ENCODE measurements at regions of chr3 and their contacts with region 1.

Region 1: GRCh38 chr3:119579366-119580165 is at the start of gene ADPRH:
- DNase-seq: peak; percentile 63 to 84 (median 67)
- H3K4me3 ChIP-seq: peak within 1 kb of the TSS; percentile 62 to 77 (median 75)
- H3K4me3 Mint-ChIP-seq: peak within 1 kb of the TSS; percentile 90 to 96
- H3K27ac ChIP-seq: peak within 1 kb of the TSS; percentile 97 to 98
- H3K27ac Mint-ChIP-seq: peak within 1 kb of the TSS; percentile 96 to 99 (median 98)
- H3K4me1 ChIP-seq: peaks cover 19 to 29% of the 10 kb centered on the region in 2 donors
- H3K4me1 Mint-ChIP-seq: peaks cover 25% of the 10 kb centered on the region
- H3K27me3 ChIP-seq: no peaks in the 10 kb centered on the region
- H3K27me3 Mint-ChIP-seq: no peaks in the 10 kb centered on the region
- CTCF ChIP-seq: no peak
- polyA plus RNA-seq, gene ADPRH: 10.6 to 37.8 (median 31.5) TPM

Region 2: DNA sequence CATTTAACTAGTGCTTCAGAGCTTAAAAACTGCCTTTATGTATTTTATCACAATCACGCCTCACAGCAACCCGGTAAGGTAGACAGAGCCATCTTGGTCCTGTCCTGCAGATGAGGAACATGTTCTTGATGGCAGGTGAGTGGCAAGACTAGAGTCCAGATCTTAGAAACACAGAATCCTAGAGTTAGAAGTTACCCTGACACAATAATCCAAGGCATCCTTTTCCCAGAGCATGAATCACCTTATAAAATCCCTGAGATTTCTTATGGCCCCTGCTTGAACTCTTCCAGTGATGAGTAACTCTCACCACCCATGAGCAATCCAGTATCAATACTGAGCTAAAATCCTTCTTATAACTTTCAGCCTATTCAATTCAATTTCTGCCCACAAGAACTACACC is 64.0 kb after region 1 on chr3:
- intact Hi-C with region 1: loop called in 1 of 2 experiments (anchors 10 kb)
- DNase-seq: peak in 1 of 3 donors; percentile 36
- H3K4me3 ChIP-seq: no peak overlapping the region
- H3K4me3 Mint-ChIP-seq: no peak overlapping the region
- H3K27ac ChIP-seq: no peak overlapping the region
- H3K27ac Mint-ChIP-seq: no peak overlapping the region
- H3K4me1 ChIP-seq: peaks cover 10 to 11% of the 10 kb centered on the region in 2 donors
- H3K4me1 Mint-ChIP-seq: peaks cover 14% of the 10 kb centered on the region
- H3K27me3 ChIP-seq: no peaks in the 10 kb centered on the region
- H3K27me3 Mint-ChIP-seq: peaks cover 0 to 2% (median 0%) of the 10 kb centered on the region in 3 donors
- CTCF ChIP-seq: no peak

Region 3: GRCh38 chr3:119779731-119780383 is 200.3 kb after region 1 on chr3:
- intact Hi-C with region 1: no loop called
- DNase-seq: no peak
- H3K4me3 ChIP-seq: no peak overlapping the region
- H3K4me3 Mint-ChIP-seq: no peak overlapping the region
- H3K27ac ChIP-seq: peak overlapping the region in 1 of 2 donors; percentile 60
- H3K27ac Mint-ChIP-seq: peak overlapping the region in 5 of 7 donors; percentile 19 to 77 (median 59)
- H3K4me1 ChIP-seq: peaks cover 20 to 27% of the 10 kb centered on the region in 2 donors
- H3K4me1 Mint-ChIP-seq: peaks cover 37% of the 10 kb centered on the region
- H3K27me3 ChIP-seq: no peaks in the 10 kb centered on the region
- H3K27me3 Mint-ChIP-seq: no peaks in the 10 kb centered on the region
- CTCF ChIP-seq: no peak

Measured in CD14-positive monocyte (primary cell).